ENCODE measurements at regions of chr4 and their contacts with region 1.

Region 1: DNA sequence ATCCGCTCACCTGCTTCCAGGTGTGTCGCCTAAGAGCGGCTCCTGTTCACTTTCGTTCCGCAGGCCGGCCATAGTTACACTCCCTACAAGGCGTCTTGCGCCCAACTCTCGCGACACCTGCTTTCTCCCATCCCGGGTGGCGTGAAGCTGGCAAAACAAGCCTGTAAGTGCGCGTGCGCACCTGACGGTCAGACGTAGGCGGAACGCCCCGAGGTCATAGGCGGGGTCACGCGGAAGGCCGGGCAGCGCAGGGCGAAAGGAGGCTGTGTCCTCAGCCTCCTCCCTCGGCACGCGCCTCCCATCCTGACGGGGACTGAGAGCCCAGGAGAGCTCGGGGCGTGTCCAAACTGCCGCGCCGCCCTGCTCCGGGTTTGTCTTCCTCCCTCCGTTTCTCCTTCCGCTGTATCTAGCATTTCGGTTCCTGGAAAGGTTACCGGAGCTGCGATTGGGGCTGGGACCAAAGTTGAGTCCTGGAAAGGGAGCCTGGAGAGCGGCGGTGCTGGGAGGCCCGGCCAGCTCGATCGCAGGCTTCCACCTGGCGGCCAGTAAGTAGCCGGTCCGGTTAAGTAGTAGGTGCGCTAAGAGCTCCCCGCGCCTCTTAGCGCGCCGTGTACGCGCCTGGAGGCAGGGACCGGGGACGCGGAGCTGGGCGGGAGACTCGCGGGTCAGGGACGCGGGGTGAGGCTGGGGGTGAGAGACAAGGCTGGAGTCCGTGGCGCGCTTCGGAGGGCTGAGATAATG is at the starts of genes ABHD18 and MFSD8:
- DNase-seq: peak; percentile 92 to 100 (median 94)
- ATAC-seq: peak; percentile 93
- H3K4me3 ChIP-seq: peak within 1 kb of the TSS; percentile 59
- H3K27ac ChIP-seq: peak within 1 kb of the TSS; percentile 80
- H3K4me1 ChIP-seq: peaks cover 13 to 31% of the 10 kb centered on the region in 2 experiments
- H3K27me3 ChIP-seq: no peaks in the 10 kb centered on the region
- CTCF ChIP-seq: peak; percentile 53 to 63 (median 60)
- EP300 ChIP-seq: no peak; the same call in 1 of the 2 replicates
- POLR2A ChIP-seq: peak; percentile 95
- RAD21 ChIP-seq: peak; percentile 35 to 53
- polyA plus RNA-seq, gene ABHD18: 6.1 to 6.9 TPM
- polyA plus RNA-seq, gene MFSD8: 25.2 to 25.4 TPM

Region 2: GRCh38 chr4:127604949-127605709 is 360.1 kb before region 1 on chr4:
- CTCF ChIA-PET with region 1: no interaction called
- POLR2A ChIA-PET with region 1: no interaction called
- in situ Hi-C with region 1: no loop called
- intact Hi-C with region 1: loop called (anchors 5 kb)
- DNase-seq: peak in 3 of 4 experiments; percentile 13 to 38 (median 17)
- ATAC-seq: peak; percentile 56
- H3K4me3 ChIP-seq: no peak overlapping the region
- H3K27ac ChIP-seq: no peak overlapping the region
- H3K4me1 ChIP-seq: no peaks in the 10 kb centered on the region
- H3K27me3 ChIP-seq: no peaks in the 10 kb centered on the region
- CTCF ChIP-seq: peak in 2 of 3 experiments; percentile 28 to 76; a peak in 3 of 6 replicates
- EP300 ChIP-seq: no peak
- POLR2A ChIP-seq: no peak
- RAD21 ChIP-seq: peak; percentile 72 to 85

Region 3: DNA sequence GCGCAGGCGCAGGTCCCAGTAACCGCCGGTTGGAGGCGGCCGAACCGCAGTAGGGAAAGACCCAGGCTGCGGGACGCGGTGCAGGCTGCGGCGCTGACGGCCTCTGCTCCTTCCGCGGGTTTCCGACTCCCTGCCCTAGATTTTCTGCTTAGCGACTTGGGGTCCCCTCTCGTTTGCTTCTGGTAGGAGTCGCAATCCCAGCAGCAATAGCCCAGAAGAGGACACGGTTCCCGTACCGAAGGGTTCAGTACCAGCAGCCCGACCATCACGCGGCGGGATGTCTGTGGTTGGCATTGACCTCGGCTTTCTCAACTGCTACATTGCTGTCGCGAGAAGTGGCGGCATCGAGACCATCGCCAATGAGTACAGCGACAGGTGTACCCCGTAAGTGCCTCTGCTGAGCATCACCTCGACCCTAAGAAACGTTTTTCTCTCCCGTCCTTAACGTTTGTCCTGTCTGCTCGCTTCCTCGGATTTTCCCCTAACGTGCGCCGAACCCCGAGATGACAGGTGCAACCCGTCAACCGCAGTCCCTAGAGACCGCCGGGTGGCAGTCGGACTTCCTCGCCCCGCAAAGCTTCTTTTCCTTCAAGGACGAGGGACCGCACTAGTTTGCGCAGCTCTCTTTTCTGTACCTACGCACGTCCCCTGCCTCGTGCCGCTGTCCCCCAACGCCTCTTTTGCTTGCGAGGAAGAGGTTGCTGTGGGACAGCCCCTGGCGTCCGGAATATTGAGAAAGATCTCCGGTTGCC is 182.8 kb before region 1 on chr4 and contains the start of gene HSPA4L:
- CTCF ChIA-PET with region 1: no interaction called
- POLR2A ChIA-PET with region 1: no interaction called
- in situ Hi-C with region 1: no loop called
- intact Hi-C with region 1: loop called (anchors 1 kb)
- DNase-seq: peak in 1 of 4 experiments; percentile 33
- ATAC-seq: peak; percentile 62
- H3K4me3 ChIP-seq: peak within 1 kb of the TSS; percentile 54
- H3K27ac ChIP-seq: peak within 1 kb of the TSS; percentile 75
- H3K4me1 ChIP-seq: peaks cover 0 to 13% of the 10 kb centered on the region in 2 experiments; a peak in 2 of 5 replicates
- H3K27me3 ChIP-seq: no peaks in the 10 kb centered on the region
- CTCF ChIP-seq: peak; percentile 35 to 68 (median 47)
- EP300 ChIP-seq: no peak
- POLR2A ChIP-seq: peak; percentile 93
- RAD21 ChIP-seq: peak in 1 of 2 experiments; percentile 26; a peak in 1 of 4 replicates
- polyA plus RNA-seq, gene HSPA4L: 15.6 to 21.7 TPM

Region 4: DNA sequence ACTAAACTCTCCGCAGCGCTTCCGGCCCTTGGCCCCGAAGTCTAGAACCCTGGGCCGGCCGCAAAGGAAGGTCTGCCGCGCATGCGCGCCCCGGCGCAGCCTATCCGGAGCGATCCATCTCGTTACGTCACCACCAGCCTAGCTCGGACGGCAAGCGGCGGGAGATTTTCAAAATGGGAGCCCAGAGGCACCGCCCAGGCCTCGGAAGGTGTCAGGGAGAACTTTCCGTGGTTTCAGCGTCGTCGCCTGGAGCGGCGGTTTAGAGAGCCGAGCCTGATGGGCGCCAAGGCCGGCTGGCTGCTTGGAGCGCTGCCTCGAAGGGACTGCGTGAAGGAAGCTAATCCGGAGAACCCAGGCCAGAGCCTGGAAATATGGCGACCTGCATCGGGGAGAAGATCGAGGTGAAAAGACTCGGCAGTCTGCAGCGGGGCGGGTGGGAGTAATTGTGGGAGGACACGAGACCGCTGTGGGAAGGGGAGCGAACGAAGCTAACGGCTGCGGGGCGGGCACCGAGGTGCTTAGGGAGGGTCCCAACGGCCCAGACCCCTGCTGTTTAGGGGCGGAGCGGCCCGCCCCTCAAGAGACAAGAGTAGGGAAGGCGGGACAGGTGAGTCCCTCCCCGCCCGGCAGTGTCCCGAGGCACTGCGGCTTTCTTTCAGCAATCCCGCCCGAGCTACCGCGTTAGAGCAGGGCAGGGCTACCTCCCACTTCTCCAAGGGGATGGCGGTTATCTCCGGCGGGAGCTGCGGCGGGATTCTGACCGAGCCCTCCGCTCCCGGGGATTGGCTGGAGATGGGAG is 84.3 kb before region 1 on chr4 and contains the start of gene PLK4:
- CTCF ChIA-PET with region 1: no interaction called
- POLR2A ChIA-PET with region 1: interaction called, 5 read pairs
- in situ Hi-C with region 1: no loop called
- intact Hi-C with region 1: loop called (anchors 2 kb)
- DNase-seq: peak; percentile 93 to 98 (median 95)
- ATAC-seq: peak; percentile 93
- H3K4me3 ChIP-seq: peak within 1 kb of the TSS; percentile 78
- H3K27ac ChIP-seq: peak within 1 kb of the TSS; percentile 99
- H3K4me1 ChIP-seq: peaks cover 8 to 11% of the 10 kb centered on the region in 2 experiments; a peak in 4 of 5 replicates
- H3K27me3 ChIP-seq: no peaks in the 10 kb centered on the region
- CTCF ChIP-seq: no peak
- EP300 ChIP-seq: peak; percentile 16; the same call in 1 of the 2 replicates
- POLR2A ChIP-seq: peak; percentile 95
- RAD21 ChIP-seq: no peak
- polyA plus RNA-seq, gene PLK4: 16.2 to 27.4 TPM

Region 5: DNA sequence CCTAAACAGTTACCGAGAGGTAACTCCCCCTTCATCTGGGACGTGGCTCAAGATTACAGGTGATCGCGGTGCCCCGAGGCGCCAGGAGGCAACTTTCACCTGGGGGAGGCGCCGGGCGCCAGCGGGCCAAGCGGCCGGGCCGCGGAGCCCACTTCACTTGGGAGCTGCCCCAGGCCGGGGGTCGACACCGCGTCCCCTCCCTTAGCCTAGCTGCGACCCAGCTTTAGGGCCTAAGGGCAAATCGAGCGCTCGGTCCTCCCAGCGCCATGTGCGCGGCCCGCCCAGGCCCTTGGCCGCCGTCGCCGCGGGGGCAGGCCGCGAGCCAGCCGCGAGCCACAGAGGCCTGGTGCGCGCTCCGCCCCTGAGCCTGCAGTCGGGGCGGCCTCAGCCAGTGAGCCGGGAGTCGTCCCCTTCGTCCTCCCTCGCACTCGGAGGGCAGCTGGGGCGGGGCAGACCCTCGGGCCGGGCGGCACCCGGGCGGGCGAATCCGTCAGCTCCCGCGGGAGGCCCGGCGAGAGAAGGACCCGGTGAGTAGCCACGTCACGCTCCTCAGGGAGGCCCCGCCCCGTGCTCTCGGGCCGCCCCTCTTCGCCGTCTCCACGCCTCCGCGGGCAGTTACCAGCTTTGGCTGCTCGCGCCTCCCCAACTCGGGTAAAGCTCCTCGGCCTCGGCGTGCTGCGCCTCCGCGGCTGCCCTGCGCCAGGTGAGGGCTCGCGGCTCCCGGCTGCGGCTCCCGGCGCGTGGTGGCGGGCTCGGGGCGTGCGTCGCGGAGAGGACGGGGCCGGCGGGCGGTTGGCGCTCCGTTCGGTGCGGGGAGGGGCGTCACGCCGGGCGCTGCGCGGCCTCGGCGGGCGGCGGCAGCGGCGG is 95.7 kb after region 1 on chr4 and contains the start of gene LARP1B:
- CTCF ChIA-PET with region 1: no interaction called
- POLR2A ChIA-PET with region 1: interaction called, 10 read pairs
- in situ Hi-C with region 1: no loop called
- intact Hi-C with region 1: loop called (anchors 2 kb)
- DNase-seq: peak; percentile 94 to 97 (median 96)
- ATAC-seq: peak; percentile 93
- H3K4me3 ChIP-seq: peak within 1 kb of the TSS; percentile 79
- H3K27ac ChIP-seq: peak within 1 kb of the TSS; percentile 97
- H3K4me1 ChIP-seq: peaks cover 0 to 27% of the 10 kb centered on the region in 2 experiments; a peak in 4 of 5 replicates
- H3K27me3 ChIP-seq: no peaks in the 10 kb centered on the region
- CTCF ChIP-seq: no peak
- EP300 ChIP-seq: 0 out of 2 replicates have a peak, but pooled peaks have one; percentile 3
- POLR2A ChIP-seq: peak; percentile 84
- RAD21 ChIP-seq: no peak
- polyA plus RNA-seq, gene LARP1B: 19.2 to 25.4 TPM

Measured in K562 (cell line).